Activated CD4-positive, alpha-beta T cell treated with anti-CD3 and anti-CD28 coated beads for 36 hours (primary cell): ENCODE measurements at regions of chr3 and their contacts with region 1.

Region 1: DNA sequence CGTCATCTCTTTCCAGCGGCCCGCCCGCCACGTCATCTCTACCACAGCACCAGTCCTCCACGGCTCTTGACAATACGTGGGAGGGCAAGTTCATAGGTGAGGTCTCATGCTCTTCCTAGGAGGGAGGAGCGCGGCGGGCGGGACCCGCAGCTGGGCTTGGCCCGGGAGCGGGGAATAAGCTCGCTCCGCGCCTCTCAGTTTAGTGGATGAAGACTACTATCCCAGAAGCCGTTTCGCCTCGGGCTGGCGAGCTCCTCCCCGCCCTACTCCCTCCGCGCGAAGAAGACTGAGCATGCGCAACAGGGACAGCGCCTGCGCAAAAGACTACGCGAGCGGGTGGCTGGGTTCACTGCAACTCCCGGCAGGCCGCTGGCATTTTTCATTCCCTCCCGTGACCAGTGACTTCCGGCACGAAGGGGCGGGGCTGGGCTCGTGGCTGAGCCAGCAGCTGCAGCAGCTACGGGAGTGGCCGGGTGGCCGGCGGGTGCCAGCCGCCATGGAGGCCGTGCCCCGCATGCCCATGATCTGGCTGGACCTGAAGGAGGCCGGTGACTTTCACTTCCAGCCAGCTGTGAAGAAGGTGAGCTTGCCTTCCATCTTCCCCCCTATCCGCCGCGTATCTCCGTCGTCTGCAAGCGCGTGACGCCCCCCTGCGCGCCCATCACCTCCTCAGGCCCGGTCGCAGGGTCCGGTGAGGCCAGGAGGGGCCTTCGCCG is at the start of gene PTPN23:
- DNase-seq: peak; percentile 99
- ATAC-seq: peak; percentile 81
- H3K4me3 Mint-ChIP-seq: peak within 1 kb of the TSS; percentile 86
- H3K27ac Mint-ChIP-seq: peak within 1 kb of the TSS; percentile 99
- H3K4me1 Mint-ChIP-seq: peaks cover 39% of the 10 kb centered on the region
- H3K27me3 Mint-ChIP-seq: no peaks in the 10 kb centered on the region
- total RNA-seq, gene PTPN23: 25.9 to 29.4 TPM

Region 2: DNA sequence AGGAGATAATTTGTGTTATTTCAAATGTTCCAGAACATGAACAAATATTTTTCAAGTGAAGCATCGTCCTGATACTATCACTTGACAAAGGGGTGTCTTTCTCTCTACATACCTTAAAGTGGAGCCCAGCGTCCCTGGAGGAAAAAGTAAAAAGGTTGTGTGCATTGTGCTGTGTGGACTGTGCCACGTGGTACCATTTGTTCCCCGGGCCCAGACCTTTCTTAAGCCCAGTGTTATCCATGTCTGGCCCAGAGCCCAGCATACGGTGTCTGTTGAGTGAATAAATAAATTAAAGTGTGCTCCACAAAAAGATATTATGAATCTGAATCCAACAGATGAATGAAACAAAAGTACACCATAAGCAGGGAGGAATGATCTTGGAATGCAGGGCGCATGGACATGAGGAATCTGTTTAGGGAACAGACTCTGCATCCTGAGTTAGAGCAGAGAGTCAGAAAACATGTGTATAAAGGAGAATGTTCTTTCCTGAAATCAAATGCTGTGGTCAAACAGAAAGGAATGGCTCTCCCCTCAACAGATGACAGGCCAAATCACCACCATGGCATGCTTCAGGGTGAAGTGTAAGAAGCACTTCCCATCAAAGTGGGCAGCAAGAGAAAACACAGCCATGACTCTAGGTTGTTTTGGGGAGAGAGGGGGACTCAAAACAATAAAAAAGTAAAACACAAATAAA is 655.0 kb before region 1 on chr3:
- CTCF ChIA-PET with region 1: no interaction called
- POLR2A ChIA-PET with region 1: no interaction called
- intact Hi-C with region 1: no loop called
- DNase-seq: no peak
- ATAC-seq: no peak
- H3K4me3 Mint-ChIP-seq: no peak overlapping the region
- H3K27ac Mint-ChIP-seq: no peak overlapping the region
- H3K4me1 Mint-ChIP-seq: no peaks in the 10 kb centered on the region
- H3K27me3 Mint-ChIP-seq: peaks cover 8% of the 10 kb centered on the region

Region 3: GRCh38 chr3:47009225-47010110 is 371.3 kb before region 1 on chr3:
- CTCF ChIA-PET with region 1: no interaction called
- POLR2A ChIA-PET with region 1: no interaction called
- intact Hi-C with region 1: loop called (anchors 1 to 10 kb)
- DNase-seq: peak; percentile 84
- ATAC-seq: peak; percentile 93
- H3K4me3 Mint-ChIP-seq: peak overlapping the region; percentile 57
- H3K27ac Mint-ChIP-seq: peak overlapping the region; percentile 58
- H3K4me1 Mint-ChIP-seq: peaks cover 4% of the 10 kb centered on the region
- H3K27me3 Mint-ChIP-seq: no peaks in the 10 kb centered on the region

Region 4: DNA sequence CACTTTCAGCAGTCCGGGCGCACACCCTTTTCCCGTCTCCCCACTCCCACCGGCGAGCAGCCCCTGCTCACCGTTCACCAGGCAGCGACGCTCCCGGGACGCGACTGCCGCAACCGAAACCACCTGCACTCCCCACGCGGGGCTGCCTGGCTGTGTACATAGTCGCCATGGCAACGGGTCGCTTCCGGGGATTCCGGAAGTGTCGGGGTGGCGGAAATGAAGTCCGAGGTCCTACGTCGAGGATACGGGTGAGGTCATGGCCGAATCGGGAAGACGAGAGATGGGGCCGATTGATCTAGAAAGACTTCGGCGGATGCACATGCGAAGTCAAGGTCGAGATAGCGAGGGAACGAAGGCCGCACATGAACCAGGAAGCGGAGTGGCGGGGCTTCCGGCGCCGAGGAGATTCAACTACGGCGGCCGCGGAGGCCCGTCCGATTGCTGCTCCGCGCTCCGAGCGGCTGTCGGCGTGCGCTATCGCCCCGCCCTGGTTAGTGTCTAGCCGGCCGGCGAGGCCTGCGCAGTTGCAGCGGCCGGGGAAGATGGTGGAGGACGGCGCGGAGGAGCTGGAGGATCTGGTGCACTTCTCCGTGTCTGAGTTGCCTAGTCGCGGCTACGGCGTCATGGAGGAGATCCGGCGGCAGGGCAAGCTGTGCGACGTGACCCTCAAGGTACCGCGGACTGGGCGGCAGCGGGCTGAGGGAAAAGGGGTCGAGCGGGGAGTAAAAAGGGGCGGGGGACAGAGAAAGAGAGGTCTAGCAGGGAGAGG is 98.2 kb before region 1 on chr3 and contains the starts of genes KIF9 and KLHL18:
- CTCF ChIA-PET with region 1: no interaction called
- POLR2A ChIA-PET with region 1: interaction called, 6 read pairs
- intact Hi-C with region 1: loop called (anchors 1 kb)
- DNase-seq: peak; percentile 97
- ATAC-seq: peak; percentile 91
- H3K4me3 Mint-ChIP-seq: peak within 1 kb of the TSS; percentile 95
- H3K27ac Mint-ChIP-seq: peak within 1 kb of the TSS; percentile 99
- H3K4me1 Mint-ChIP-seq: peaks cover 31% of the 10 kb centered on the region
- H3K27me3 Mint-ChIP-seq: no peaks in the 10 kb centered on the region
- total RNA-seq, gene KIF9: 2.7 to 5.3 TPM
- total RNA-seq, gene KLHL18: 19.0 to 22.4 TPM

Region 5: GRCh38 chr3:47399531-47400270 is 18.9 kb after region 1 on chr3:
- CTCF ChIA-PET with region 1: no interaction called
- POLR2A ChIA-PET with region 1: interaction called, 11 read pairs
- intact Hi-C with region 1: no loop called
- DNase-seq: no peak
- ATAC-seq: no peak
- H3K4me3 Mint-ChIP-seq: no peak overlapping the region
- H3K27ac Mint-ChIP-seq: peak overlapping the region; percentile 13
- H3K4me1 Mint-ChIP-seq: peaks cover 16% of the 10 kb centered on the region
- H3K27me3 Mint-ChIP-seq: no peaks in the 10 kb centered on the region

Region 6: GRCh38 chr3:47409688-47410416 is 29.1 kb after region 1 on chr3:
- CTCF ChIA-PET with region 1: no interaction called
- POLR2A ChIA-PET with region 1: no interaction called
- intact Hi-C with region 1: no loop called
- DNase-seq: no peak
- ATAC-seq: no peak
- H3K4me3 Mint-ChIP-seq: no peak overlapping the region
- H3K27ac Mint-ChIP-seq: no peak overlapping the region
- H3K4me1 Mint-ChIP-seq: no peaks in the 10 kb centered on the region
- H3K27me3 Mint-ChIP-seq: no peaks in the 10 kb centered on the region

Region 7: DNA sequence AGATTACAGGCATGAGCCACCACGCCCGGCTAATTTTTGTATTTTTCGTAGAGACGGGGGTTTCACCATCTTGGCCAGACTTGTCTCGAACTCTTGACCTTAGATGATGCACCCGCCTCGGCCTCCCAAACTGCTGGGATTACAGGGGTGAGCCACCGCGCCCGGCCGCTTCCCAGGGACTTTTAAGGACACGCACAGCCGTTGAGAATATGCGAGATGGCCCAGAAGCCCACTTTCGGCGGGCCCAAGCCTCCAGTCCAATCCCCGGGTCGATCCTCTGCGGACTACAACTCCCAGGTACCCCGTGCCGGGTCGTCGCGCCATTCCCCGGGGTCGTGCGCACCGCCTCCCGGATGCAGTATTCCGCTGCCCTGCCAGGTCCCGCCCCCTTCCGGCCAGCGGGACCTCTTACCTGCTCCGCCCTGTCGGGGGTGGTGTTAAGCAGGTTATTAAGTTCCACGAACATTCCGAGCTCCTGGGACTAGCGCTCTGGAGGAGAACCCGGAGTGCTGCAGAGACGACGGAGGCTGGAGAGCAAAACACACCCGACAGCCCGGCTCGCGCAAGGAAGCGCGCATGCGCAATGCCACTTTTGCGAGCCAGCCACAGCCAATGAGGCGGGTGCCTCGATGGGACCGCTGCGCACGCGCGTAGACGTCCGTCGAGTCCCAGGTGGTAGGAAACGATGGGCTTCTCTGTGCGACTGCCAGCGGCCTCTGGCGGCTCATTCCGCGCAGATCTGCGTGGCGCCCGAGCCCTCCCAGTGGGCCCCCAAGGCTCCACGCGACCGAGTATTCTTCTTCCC is 132.6 kb after region 1 on chr3 and contains the start of gene ELP6:
- CTCF ChIA-PET with region 1: no interaction called
- POLR2A ChIA-PET with region 1: no interaction called
- intact Hi-C with region 1: loop called (anchors 1 kb)
- DNase-seq: peak; percentile 99
- ATAC-seq: peak; percentile 97
- H3K4me3 Mint-ChIP-seq: peak within 1 kb of the TSS; percentile 91
- H3K27ac Mint-ChIP-seq: peak within 1 kb of the TSS; percentile 96
- H3K4me1 Mint-ChIP-seq: peaks cover 20% of the 10 kb centered on the region
- H3K27me3 Mint-ChIP-seq: no peaks in the 10 kb centered on the region
- total RNA-seq, gene ELP6: 27.8 to 40.3 TPM

Region 8: DNA sequence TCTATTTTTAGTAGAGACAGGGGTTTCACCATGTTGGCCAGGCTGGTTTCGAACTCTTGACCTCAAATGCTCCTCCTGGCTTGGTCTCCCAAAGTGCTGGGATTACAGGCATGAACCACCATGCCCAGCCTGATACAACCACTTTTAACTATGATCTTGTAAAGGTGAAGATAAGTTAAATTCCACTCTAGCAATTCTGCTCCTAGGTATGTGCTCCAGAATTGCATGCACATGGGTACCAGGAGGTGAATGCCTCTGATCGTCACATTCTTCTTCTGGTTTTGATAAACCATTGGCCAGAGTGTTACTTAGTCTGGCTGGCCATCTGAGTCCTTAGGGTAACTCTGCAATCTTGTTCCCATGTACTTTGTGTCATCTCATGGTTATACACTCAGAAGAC is 175.6 kb after region 1 on chr3:
- CTCF ChIA-PET with region 1: no interaction called
- POLR2A ChIA-PET with region 1: no interaction called
- intact Hi-C with region 1: no loop called
- DNase-seq: no peak
- ATAC-seq: no peak
- H3K4me3 Mint-ChIP-seq: no peak overlapping the region
- H3K27ac Mint-ChIP-seq: no peak overlapping the region
- H3K4me1 Mint-ChIP-seq: no peaks in the 10 kb centered on the region
- H3K27me3 Mint-ChIP-seq: peaks cover 2% of the 10 kb centered on the region

Region 9: DNA sequence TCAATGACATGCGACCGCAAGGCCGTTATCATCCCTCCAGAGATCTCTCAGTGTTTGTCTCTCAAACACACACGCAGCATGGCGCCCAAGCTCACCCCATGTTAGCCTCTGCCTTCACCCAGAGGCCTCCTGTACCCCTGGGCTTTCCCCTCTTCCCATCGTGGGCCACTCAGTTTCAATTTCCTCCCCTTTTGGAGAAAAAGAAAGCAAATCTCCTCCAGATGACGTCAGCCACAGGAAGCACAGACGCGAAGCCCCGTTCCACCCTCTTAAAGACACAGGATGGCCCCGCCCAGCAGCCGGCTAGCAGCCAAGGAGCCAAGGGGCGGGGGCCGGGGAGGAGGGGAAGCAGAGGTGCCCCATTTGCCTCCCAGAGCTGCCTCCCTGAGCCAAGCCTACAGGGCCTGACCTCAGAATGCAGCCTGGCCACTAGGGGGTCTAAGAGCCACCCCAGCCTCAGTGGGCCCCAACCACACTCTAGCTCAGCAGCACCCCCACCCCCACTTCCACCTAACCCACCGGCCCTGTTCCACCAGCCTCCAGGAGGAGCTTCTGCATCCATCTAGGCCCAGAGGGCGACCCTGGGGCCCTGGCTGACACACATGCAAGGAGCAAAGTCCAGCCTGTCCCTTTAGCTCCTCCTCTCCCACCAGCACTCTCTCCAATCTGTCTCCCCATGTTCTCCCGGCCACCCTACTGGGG is 1092.3 kb after region 1 on chr3:
- CTCF ChIA-PET with region 1: no interaction called
- POLR2A ChIA-PET with region 1: no interaction called
- intact Hi-C with region 1: loop called in 1 of 2 experiments (anchors 5 kb)
- DNase-seq: peak; percentile 99
- ATAC-seq: peak; percentile 90
- H3K4me3 Mint-ChIP-seq: peak overlapping the region; percentile 74
- H3K27ac Mint-ChIP-seq: peak overlapping the region; percentile 93
- H3K4me1 Mint-ChIP-seq: peaks cover 49% of the 10 kb centered on the region
- H3K27me3 Mint-ChIP-seq: no peaks in the 10 kb centered on the region